Panc1 (cell line): ENCODE measurements at regions of chr20 and their contacts with region 1.

Region 1: DNA sequence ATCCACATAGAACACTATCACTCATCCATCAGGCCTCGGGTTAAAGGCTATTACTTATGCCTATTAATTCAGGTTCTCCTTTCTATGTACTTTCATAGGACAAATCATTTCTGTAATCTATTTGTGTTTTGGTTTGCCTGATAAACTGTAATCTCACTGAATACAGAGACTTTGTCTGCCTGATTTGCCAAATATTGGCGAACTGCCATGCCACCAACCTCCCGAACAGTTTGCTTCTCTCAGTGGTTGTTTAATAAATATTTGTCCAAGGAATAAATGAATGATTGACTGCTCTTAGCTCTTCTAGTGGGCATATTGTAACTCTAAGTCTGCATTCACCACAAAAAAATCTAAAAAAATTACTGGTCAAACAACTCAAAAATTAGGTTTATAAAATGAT is 170.1 kb upstream of the ZFP64 start:
- DNase-seq: no peak
- ATAC-seq: no peak
- H3K4me3 ChIP-seq: no peak overlapping the region
- H3K27ac ChIP-seq: no peak overlapping the region
- H3K4me1 ChIP-seq: no peaks in the 10 kb centered on the region
- H3K27me3 ChIP-seq: no peaks in the 10 kb centered on the region; the same call in 1 of the 2 replicates
- CTCF ChIP-seq: no peak

Region 2: DNA sequence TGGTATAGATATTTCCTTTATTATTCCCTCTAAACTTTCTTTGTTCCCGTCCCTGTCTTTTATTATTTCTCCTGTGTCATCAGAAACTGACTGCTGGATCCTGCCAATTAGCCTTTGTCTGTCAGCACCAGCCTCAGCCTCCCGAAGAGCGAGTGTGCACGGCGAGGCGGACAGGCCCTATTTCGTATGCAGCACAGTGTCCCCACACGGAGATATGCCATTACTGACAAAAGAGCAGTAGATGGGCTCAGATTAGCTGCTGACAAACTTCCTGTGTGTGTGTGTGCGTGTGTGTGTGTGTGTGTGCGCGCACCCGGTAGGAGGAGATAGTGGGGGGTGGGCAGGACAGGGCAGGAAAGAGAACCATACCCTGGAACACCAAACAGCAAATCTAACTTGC is 70.5 kb before region 1 on chr20:
- CTCF ChIA-PET with region 1: no interaction called
- POLR2A ChIA-PET with region 1: no interaction called
- in situ Hi-C with region 1: no loop called
- intact Hi-C with region 1: no loop called
- DNase-seq: no peak
- ATAC-seq: no peak
- H3K4me3 ChIP-seq: no peak overlapping the region
- H3K27ac ChIP-seq: no peak overlapping the region
- H3K4me1 ChIP-seq: no peaks in the 10 kb centered on the region
- H3K27me3 ChIP-seq: no peaks in the 10 kb centered on the region
- CTCF ChIP-seq: no peak

Region 3: GRCh38 chr20:52349806-52350205 is 11.8 kb before region 1 on chr20:
- CTCF ChIA-PET with region 1: no interaction called
- POLR2A ChIA-PET with region 1: interaction called, 10 read pairs
- in situ Hi-C with region 1: no loop called
- intact Hi-C with region 1: no loop called
- DNase-seq: no peak
- ATAC-seq: no peak
- H3K4me3 ChIP-seq: no peak overlapping the region
- H3K27ac ChIP-seq: no peak overlapping the region
- H3K4me1 ChIP-seq: no peaks in the 10 kb centered on the region
- H3K27me3 ChIP-seq: no peaks in the 10 kb centered on the region
- CTCF ChIP-seq: no peak